ENCODE measurements at regions of chr20 and their contacts with region 1.

Region 1: DNA sequence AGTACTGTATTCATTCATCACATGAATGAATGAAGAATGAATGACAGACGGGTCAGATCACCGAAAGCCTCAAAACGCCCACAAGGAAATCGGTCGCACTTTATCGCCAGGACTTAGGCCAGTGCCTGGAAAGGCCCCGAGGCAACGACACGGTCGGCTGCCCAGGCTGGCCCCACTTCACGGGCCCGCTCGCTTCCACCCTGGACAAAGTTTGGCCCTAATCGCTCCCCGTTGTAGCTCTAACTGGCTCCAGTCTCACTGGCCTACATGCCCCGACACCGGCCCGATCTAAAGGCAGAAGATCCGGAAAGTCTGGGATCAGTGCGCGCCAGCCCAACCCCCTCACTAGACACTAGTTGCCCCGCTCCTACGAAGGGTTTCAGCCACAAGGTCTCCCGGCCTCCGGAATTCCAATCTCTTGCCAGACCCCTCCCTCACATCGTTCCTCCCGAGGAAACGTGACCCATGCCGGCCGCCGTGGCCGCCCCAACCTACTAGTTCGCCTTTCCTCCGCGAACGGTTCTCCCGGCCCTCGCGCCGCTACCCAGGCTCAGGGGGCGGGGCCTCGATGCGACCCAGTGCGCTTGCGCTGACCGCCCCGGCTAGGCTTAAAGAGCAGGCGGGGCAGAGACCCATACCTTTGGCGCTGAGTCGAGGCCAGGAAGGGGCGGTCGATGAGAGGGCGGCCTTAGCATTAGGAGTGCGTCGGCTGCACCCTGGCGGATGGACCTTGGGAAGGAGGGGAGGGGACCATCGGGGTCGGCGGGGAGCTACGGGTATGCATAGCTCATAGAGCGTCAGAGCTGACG is at the starts of genes GSS and MYH7B:
- DNase-seq: peak; percentile 98
- ATAC-seq: peak; percentile 94
- H3K4me3 ChIP-seq: peak within 1 kb of the TSS; percentile 76
- H3K27ac ChIP-seq: peak within 1 kb of the TSS; percentile 67
- H3K4me1 ChIP-seq: peaks cover 17% of the 10 kb centered on the region
- H3K27me3 ChIP-seq: no peaks in the 10 kb centered on the region
- CTCF ChIP-seq: peak; percentile 79
- total RNA-seq, gene GSS: 82.0 and 95.9 TPM in 2 replicates
- total RNA-seq, gene MYH7B: 0.04 TPM in 1 of 2 replicates, not detected in the other

Region 2: GRCh38 chr20:34876162-34877001 is 79.1 kb before region 1 on chr20 and contains the start of gene ACSS2:
- CTCF ChIA-PET with region 1: interaction called, 30 read pairs
- POLR2A ChIA-PET with region 1: interaction called, 5 read pairs
- intact Hi-C with region 1: loop called (anchors 1 kb)
- DNase-seq: peak; percentile 98
- ATAC-seq: peak; percentile 85
- H3K4me3 ChIP-seq: peak within 1 kb of the TSS; percentile 84
- H3K27ac ChIP-seq: peak within 1 kb of the TSS; percentile 52
- H3K4me1 ChIP-seq: peaks cover 20% of the 10 kb centered on the region
- H3K27me3 ChIP-seq: no peaks in the 10 kb centered on the region
- CTCF ChIP-seq: no peak
- total RNA-seq, gene ACSS2: 78.9 and 125 TPM in 2 replicates

Region 3: DNA sequence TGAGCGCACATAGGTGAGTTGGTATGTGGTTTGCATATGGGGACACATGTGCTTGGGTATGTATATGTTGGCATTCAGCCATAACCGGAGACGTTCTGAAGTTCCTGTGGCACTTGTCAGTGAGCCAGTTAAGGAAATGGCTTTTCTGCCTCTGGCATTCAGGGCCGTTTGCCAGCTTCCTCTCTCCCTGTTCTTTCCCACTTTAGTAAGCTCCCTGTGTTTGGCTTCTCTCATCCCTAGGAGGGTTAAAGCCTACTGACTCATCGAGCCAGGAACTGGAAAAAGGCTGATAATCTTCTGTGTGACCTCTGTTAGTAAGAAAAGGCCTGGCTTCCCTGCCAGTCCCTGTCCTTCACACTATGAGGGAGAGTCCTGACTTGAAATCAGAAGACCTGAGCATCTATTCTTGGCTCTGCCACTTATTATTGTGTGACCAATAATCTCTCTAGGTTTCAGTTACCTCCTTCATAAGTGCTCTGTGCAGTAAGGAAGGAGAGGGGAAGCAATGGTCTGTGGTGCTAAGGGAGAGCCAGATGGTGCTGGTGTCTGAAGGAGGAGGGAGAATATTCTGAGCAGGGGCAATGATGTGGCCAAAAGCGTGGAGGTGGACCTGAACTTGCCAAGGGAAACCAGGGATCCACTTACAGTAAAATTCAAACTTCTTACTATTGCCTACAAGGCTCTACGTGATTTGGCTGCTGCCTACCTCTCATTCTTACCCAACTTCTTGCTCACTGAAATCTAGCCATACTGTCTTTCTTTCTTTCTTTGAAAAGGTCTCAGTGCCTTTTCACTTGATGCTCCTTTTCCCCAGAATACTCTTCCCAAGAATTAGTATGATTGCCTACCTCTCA is 47.6 kb before region 1 on chr20:
- CTCF ChIA-PET with region 1: interaction called, 4 read pairs
- POLR2A ChIA-PET with region 1: no interaction called
- intact Hi-C with region 1: loop called (anchors 2 kb)
- DNase-seq: peak; percentile 100
- ATAC-seq: peak; percentile 99
- H3K4me3 ChIP-seq: no peak overlapping the region
- H3K27ac ChIP-seq: peak overlapping the region; percentile 94
- H3K4me1 ChIP-seq: peaks cover 23% of the 10 kb centered on the region
- H3K27me3 ChIP-seq: no peaks in the 10 kb centered on the region
- CTCF ChIP-seq: no peak

Region 4: DNA sequence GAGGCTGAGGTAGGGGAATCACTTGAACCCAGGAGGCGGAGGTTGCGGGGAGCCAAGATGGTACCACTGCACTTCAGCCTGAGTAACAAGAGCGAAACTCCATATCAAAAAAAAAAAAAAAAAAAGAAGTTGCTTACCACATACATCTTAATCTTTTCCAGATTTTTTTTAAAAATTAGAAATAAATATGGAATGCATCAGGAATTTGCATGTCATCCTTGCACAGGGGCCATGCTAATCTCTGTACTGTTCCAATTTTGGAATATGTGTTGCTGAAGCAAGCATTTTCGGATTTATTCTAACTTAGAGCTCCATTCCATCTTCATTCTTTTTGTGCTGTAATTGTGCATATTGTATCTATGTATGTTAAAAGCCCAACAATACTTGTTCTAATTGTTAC is 74.7 kb after region 1 on chr20:
- CTCF ChIA-PET with region 1: no interaction called
- POLR2A ChIA-PET with region 1: interaction called, 11 read pairs
- intact Hi-C with region 1: no loop called
- DNase-seq: no peak
- ATAC-seq: no peak
- H3K4me3 ChIP-seq: no peak overlapping the region
- H3K27ac ChIP-seq: no peak overlapping the region
- H3K4me1 ChIP-seq: no peaks in the 10 kb centered on the region
- H3K27me3 ChIP-seq: no peaks in the 10 kb centered on the region
- CTCF ChIP-seq: no peak

Measured in PC-3 (cell line).